ENCODE measurements at regions of chr11 and their contacts with region 1.

Region 1: GRCh38 chr11:9092853-9093778 is 1.7 kb upstream of the SCUBE2 start:
- DNase-seq: no peak
- H3K4me3 ChIP-seq: no peak overlapping the region
- H3K27ac ChIP-seq: no peak overlapping the region
- H3K4me1 ChIP-seq: peaks cover 1 to 4% (median 3%) of the 10 kb centered on the region in 4 experiments; a peak in 5 of 7 replicates
- H3K27me3 ChIP-seq: peaks cover 11 to 36% (median 30%) of the 10 kb centered on the region in 4 experiments
- CTCF ChIP-seq: peak in 2 of 3 experiments; percentile 8 to 10; a peak in 1 of 4 replicates
- EP300 ChIP-seq: no peak
- POLR2A ChIP-seq: no peak
- RAD21 ChIP-seq: no peak

Region 2: DNA sequence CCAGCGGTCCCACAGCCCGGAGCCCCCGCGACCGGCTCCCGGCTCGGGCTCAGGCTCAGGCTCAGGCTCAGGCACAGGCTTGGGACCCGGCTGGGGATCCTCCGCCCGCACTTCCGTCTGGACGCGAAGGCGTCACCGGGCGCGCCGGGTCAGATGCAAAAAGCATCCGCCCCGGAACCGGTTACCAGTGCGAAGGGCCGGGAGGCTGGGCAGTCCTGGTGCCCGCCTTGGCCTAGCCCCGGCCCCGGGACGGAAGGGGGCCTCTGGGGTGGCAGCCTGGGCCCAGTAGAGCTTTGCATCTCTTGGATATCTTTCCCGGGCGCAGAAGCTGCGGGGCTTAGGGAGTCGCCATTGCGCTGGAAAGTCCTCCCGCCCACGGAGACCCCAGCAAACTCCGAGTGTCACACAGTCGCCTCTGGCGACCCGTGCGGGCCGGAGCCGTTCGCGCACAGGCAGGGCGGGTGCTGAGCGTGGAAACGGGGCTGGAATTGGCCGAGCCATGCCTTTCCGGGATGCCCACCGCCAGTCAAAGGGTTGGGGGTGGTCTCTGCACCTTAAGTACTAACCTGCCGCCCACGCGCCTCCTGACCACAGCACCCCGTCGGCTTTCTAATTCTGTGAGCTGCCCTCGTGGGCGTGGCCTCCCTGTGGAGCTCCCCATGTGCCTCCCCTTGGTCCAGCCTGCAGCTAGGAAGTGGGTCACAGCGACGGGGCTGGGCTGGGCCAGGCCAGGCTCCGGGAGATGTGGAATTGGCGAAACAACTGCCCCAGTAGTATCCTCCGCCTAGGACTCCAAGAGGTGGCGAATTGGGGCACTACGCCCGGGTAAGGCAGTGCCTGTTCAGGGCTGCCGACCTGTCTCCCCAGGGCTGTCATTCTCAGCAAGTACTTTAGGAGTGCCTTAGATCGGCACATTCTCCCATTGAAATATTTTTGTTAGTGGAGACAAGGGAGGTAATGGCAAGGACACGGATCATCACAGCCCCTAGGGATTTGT is 128.5 kb before region 1 on chr11 and contains the start of gene TMEM9B:
- CTCF ChIA-PET with region 1: interaction called, 10 read pairs
- POLR2A ChIA-PET with region 1: no interaction called
- DNase-seq: peak; percentile 56 to 92
- H3K4me3 ChIP-seq: peak within 1 kb of the TSS; percentile 64 to 86 (median 68)
- H3K27ac ChIP-seq: peak within 1 kb of the TSS; percentile 53; the same call in 1 of the 2 replicates
- H3K4me1 ChIP-seq: peaks cover 0 to 4% (median 2%) of the 10 kb centered on the region in 4 experiments; a peak in 3 of 7 replicates
- H3K27me3 ChIP-seq: no peaks in the 10 kb centered on the region
- CTCF ChIP-seq: no peak
- EP300 ChIP-seq: no peak
- POLR2A ChIP-seq: peak; percentile 53 to 91
- RAD21 ChIP-seq: no peak; a peak in 1 of 4 replicates
- total RNA-seq, gene TMEM9B: 9.4 and 10.0 TPM in 2 replicates

Region 3: GRCh38 chr11:9078113-9079086 is 14.7 kb before region 1 on chr11:
- CTCF ChIA-PET with region 1: interaction called, 177 read pairs
- POLR2A ChIA-PET with region 1: interaction called, 3 read pairs
- DNase-seq: peak in 1 of 2 experiments; percentile 46
- H3K4me3 ChIP-seq: no peak overlapping the region
- H3K27ac ChIP-seq: no peak overlapping the region
- H3K4me1 ChIP-seq: no peaks in the 10 kb centered on the region; a peak in 1 of 7 replicates
- H3K27me3 ChIP-seq: no peaks in the 10 kb centered on the region
- CTCF ChIP-seq: peak; percentile 46 to 62 (median 54)
- EP300 ChIP-seq: no peak
- POLR2A ChIP-seq: no peak
- RAD21 ChIP-seq: peak; percentile 26 to 52; a peak in 3 of 4 replicates

Region 4: GRCh38 chr11:9109939-9110731 is 17.0 kb after region 1 on chr11:
- CTCF ChIA-PET with region 1: interaction called, 103 read pairs
- POLR2A ChIA-PET with region 1: interaction called, 5 read pairs
- DNase-seq: no peak
- H3K4me3 ChIP-seq: no peak overlapping the region
- H3K27ac ChIP-seq: no peak overlapping the region
- H3K4me1 ChIP-seq: no peaks in the 10 kb centered on the region
- H3K27me3 ChIP-seq: no peaks in the 10 kb centered on the region
- CTCF ChIP-seq: no peak
- EP300 ChIP-seq: no peak
- POLR2A ChIP-seq: no peak
- RAD21 ChIP-seq: no peak

Region 5: GRCh38 chr11:9130297-9130696 is 37.2 kb after region 1 on chr11:
- CTCF ChIA-PET with region 1: interaction called, 41 read pairs
- POLR2A ChIA-PET with region 1: no interaction called
- DNase-seq: no peak
- H3K4me3 ChIP-seq: no peak overlapping the region
- H3K27ac ChIP-seq: no peak overlapping the region
- H3K4me1 ChIP-seq: no peaks in the 10 kb centered on the region
- H3K27me3 ChIP-seq: no peaks in the 10 kb centered on the region
- CTCF ChIP-seq: peak in 1 of 3 experiments; percentile 17; a peak in 1 of 4 replicates
- EP300 ChIP-seq: no peak
- POLR2A ChIP-seq: no peak
- RAD21 ChIP-seq: no peak

Measured in H1 (cell line).